H1 (cell line): ENCODE measurements at regions of chr10 and their contacts with region 1.

Region 1: DNA sequence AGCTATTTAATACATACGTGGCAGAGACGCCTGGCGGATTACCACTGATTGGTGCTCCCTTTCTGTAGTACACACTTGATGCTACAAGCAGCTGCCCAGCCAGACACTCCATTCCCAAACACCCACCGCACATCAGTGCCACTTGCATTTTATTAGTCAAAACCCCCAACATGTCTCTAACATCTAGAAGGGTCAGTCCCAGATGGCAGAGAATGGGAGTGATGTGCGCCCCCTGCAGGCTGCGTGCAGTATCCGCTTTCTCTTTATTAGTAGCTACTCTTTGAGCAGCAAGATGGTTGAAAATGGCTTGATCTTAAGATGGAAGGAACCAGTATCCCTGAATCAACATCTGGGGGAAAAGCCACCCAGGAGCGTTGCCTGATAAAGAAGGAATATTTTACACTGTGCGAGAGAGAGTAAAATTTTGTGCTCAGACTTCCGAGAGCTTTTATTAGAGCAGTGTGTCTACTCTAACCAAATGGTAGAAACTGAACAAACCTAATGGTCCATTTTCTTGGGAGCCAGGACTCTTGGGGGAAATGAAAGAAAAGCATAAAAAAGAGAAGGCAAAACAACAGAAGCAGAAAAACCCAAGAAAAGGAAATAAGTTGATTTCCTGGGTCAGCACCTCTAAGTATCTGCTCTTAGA is 78.3 kb downstream of the ST8SIA6 start:
- DNase-seq: peak; percentile 23 to 87
- H3K4me3 ChIP-seq: no peak overlapping the region
- H3K27ac ChIP-seq: no peak overlapping the region
- H3K4me1 ChIP-seq: peaks cover 0 to 7% (median 2%) of the 10 kb centered on the region in 4 experiments; a peak in 3 of 7 replicates
- H3K27me3 ChIP-seq: no peaks in the 10 kb centered on the region
- CTCF ChIP-seq: peak; percentile 63 to 93 (median 91)
- EP300 ChIP-seq: no peak
- POLR2A ChIP-seq: no peak
- RAD21 ChIP-seq: peak; percentile 57 to 64

Region 2: GRCh38 chr10:17348501-17349349 is 27.3 kb before region 1 on chr10:
- CTCF ChIA-PET with region 1: interaction called, 18 read pairs
- POLR2A ChIA-PET with region 1: no interaction called
- DNase-seq: no peak
- H3K4me3 ChIP-seq: no peak overlapping the region
- H3K27ac ChIP-seq: no peak overlapping the region
- H3K4me1 ChIP-seq: no peaks in the 10 kb centered on the region
- H3K27me3 ChIP-seq: no peaks in the 10 kb centered on the region
- CTCF ChIP-seq: no peak
- EP300 ChIP-seq: no peak
- POLR2A ChIP-seq: no peak
- RAD21 ChIP-seq: no peak

Region 3: GRCh38 chr10:17353559-17354300 is 22.3 kb before region 1 on chr10:
- CTCF ChIA-PET with region 1: interaction called, 18 read pairs
- POLR2A ChIA-PET with region 1: no interaction called
- DNase-seq: no peak
- H3K4me3 ChIP-seq: no peak overlapping the region
- H3K27ac ChIP-seq: no peak overlapping the region
- H3K4me1 ChIP-seq: no peaks in the 10 kb centered on the region
- H3K27me3 ChIP-seq: no peaks in the 10 kb centered on the region
- CTCF ChIP-seq: no peak
- EP300 ChIP-seq: no peak
- POLR2A ChIP-seq: no peak
- RAD21 ChIP-seq: no peak

Region 4: GRCh38 chr10:17387861-17388508 is 11.9 kb after region 1 on chr10:
- CTCF ChIA-PET with region 1: interaction called, 71 read pairs
- POLR2A ChIA-PET with region 1: interaction called, 4 read pairs
- DNase-seq: no peak
- H3K4me3 ChIP-seq: no peak overlapping the region
- H3K27ac ChIP-seq: no peak overlapping the region
- H3K4me1 ChIP-seq: peaks cover 0 to 4% (median 0%) of the 10 kb centered on the region in 4 experiments; a peak in 2 of 7 replicates
- H3K27me3 ChIP-seq: no peaks in the 10 kb centered on the region
- CTCF ChIP-seq: no peak
- EP300 ChIP-seq: no peak
- POLR2A ChIP-seq: no peak
- RAD21 ChIP-seq: no peak

Region 5: DNA sequence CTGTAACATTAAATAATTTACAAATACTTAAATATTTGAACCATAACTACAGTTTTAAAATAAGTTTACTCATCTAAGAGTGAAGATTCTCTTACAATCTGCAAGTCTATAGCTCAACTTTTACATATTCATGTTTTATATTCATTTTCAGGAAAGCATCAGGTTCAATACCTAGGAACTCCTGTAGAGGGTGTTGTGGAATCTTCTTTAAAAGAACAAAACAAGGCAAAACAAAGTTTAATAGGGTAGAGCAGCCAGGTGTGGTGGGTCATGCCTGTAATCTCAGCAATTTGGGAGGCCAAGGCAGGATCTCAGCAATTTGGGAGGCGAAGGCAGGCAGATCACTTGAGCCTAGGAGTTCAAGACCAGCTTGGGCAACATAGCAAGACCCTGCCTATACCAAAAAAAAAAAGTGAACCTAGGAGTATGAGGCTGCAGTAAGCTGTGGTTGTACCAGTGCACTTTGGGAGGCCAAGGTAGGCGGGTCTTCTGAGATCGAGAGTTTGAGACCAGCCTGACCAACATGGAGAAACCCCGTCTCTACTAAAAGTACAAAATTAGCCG is 33.2 kb after region 1 on chr10:
- CTCF ChIA-PET with region 1: interaction called, 46 read pairs
- POLR2A ChIA-PET with region 1: no interaction called
- DNase-seq: no peak
- H3K4me3 ChIP-seq: no peak overlapping the region
- H3K27ac ChIP-seq: no peak overlapping the region
- H3K4me1 ChIP-seq: peaks cover 0 to 6% (median 4%) of the 10 kb centered on the region in 4 experiments; a peak in 5 of 7 replicates
- H3K27me3 ChIP-seq: no peaks in the 10 kb centered on the region
- CTCF ChIP-seq: peak in 2 of 3 experiments; percentile 19 to 45; a peak in 2 of 4 replicates
- EP300 ChIP-seq: no peak
- POLR2A ChIP-seq: no peak
- RAD21 ChIP-seq: peak; percentile 26 to 44

Region 6: GRCh38 chr10:17418249-17418648 is 42.2 kb after region 1 on chr10:
- CTCF ChIA-PET with region 1: interaction called, 11 read pairs
- POLR2A ChIA-PET with region 1: no interaction called
- DNase-seq: no peak
- H3K4me3 ChIP-seq: no peak overlapping the region
- H3K27ac ChIP-seq: no peak overlapping the region
- H3K4me1 ChIP-seq: 0 out of 7 replicates have a peak, but pooled peaks cover 0 to 2% (median 0%) of the 10 kb centered on the region in 4 experiments
- H3K27me3 ChIP-seq: no peaks in the 10 kb centered on the region
- CTCF ChIP-seq: no peak
- EP300 ChIP-seq: no peak
- POLR2A ChIP-seq: no peak
- RAD21 ChIP-seq: no peak

Region 7: DNA sequence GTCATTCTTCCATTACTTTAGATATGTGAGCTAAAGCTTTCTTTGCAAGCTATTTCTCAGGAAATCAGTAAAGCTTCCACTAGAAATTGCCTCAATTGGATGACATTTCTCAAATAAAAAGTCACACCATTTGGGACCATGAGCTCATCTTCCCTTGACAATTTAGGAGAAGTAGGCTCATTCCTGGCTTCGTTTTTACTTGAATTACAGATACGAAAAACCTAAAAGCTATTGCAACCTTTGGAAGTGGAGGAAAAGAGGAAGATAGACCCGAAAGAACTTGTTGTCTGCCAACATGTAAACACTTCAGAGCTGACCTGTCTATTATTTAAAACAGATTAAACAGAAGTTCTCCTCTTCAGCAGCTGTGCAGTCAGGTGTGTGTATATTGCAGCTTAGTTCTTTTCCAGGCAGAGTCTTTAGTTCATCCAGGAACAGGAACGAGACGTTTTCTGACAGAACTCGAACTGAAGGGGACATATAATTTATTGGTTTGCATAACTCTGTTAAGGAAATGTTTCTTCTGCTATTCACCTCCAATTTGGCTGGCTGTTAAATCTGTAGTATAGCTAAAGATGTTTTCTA is 121.5 kb after region 1 on chr10:
- CTCF ChIA-PET with region 1: no interaction called
- POLR2A ChIA-PET with region 1: no interaction called
- DNase-seq: no peak
- H3K4me3 ChIP-seq: no peak overlapping the region
- H3K27ac ChIP-seq: no peak overlapping the region
- H3K4me1 ChIP-seq: no peaks in the 10 kb centered on the region
- H3K27me3 ChIP-seq: peaks cover 0 to 1% (median 0%) of the 10 kb centered on the region in 4 experiments; a peak in 1 of 7 replicates
- CTCF ChIP-seq: no peak
- EP300 ChIP-seq: no peak
- POLR2A ChIP-seq: no peak
- RAD21 ChIP-seq: no peak

Region 8: GRCh38 chr10:17703706-17704105 is 327.6 kb after region 1 on chr10:
- CTCF ChIA-PET with region 1: no interaction called
- POLR2A ChIA-PET with region 1: no interaction called
- DNase-seq: no peak
- H3K4me3 ChIP-seq: no peak overlapping the region
- H3K27ac ChIP-seq: no peak overlapping the region
- H3K4me1 ChIP-seq: no peaks in the 10 kb centered on the region
- H3K27me3 ChIP-seq: no peaks in the 10 kb centered on the region
- CTCF ChIP-seq: no peak
- EP300 ChIP-seq: no peak
- POLR2A ChIP-seq: no peak
- RAD21 ChIP-seq: no peak